PC-3 (cell line): ENCODE measurements at regions of chr3 and their contacts with region 1.

Region 1: DNA sequence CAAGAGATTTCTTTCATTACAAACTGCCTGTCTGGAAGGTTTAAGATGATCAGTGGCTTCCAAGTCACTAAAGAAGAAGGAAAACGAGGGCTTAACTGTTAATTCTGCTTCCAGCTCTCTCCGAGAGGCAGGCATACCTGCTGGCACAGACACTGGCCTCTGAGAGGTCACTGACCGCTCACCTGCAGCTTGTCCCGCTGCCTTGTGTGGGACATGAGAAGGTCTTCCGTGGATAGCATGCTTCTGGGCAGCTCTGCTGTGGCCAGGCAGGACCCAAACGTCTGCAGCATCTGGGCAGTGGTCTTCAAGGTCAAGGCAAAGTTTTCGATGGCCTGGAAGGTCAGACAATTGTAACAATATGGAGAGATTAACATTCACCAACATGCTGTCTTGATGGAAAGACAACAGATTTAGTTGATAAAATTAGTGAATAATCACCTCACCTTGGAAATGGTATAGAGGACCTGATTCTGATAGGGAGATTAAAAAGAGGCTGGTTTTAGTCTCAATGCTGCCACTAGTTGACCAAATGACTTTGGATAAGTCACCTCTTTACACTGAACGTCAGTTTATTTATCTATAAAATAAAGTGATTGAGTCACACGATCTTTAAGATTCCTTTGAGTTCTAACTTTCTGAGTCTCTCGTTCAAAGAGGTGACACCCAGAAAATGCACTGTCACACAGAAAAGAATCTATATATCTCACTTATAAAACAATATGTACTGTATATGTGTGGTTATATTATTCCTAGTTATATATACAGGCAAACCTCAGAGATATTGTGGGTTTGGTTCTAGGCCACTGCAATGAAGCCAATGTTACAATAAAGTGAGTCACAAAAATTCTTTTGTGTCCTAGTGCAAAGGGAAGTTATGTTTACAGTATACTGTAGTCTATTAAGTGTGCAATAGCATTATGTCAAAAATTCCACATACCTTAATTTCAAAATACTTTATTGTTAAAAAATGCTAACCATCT is 65.1 kb downstream of the B3GNT5 start:
- DNase-seq: peak; percentile 89
- ATAC-seq: peak; percentile 90
- H3K4me3 ChIP-seq: no peak overlapping the region
- H3K27ac ChIP-seq: peak overlapping the region; percentile 85
- H3K4me1 ChIP-seq: peaks cover 36% of the 10 kb centered on the region
- H3K27me3 ChIP-seq: no peaks in the 10 kb centered on the region
- CTCF ChIP-seq: peak; percentile 17; the same call in 1 of the 2 replicates

Region 2: GRCh38 chr3:183108001-183108449 is 210.2 kb before region 1 on chr3:
- CTCF ChIA-PET with region 1: no interaction called
- POLR2A ChIA-PET with region 1: no interaction called
- intact Hi-C with region 1: no loop called
- DNase-seq: peak; percentile 56
- ATAC-seq: peak; percentile 89
- H3K4me3 ChIP-seq: no peak overlapping the region
- H3K27ac ChIP-seq: peak overlapping the region; percentile 11
- H3K4me1 ChIP-seq: peaks cover 20% of the 10 kb centered on the region
- H3K27me3 ChIP-seq: no peaks in the 10 kb centered on the region
- CTCF ChIP-seq: no peak

Region 3: DNA sequence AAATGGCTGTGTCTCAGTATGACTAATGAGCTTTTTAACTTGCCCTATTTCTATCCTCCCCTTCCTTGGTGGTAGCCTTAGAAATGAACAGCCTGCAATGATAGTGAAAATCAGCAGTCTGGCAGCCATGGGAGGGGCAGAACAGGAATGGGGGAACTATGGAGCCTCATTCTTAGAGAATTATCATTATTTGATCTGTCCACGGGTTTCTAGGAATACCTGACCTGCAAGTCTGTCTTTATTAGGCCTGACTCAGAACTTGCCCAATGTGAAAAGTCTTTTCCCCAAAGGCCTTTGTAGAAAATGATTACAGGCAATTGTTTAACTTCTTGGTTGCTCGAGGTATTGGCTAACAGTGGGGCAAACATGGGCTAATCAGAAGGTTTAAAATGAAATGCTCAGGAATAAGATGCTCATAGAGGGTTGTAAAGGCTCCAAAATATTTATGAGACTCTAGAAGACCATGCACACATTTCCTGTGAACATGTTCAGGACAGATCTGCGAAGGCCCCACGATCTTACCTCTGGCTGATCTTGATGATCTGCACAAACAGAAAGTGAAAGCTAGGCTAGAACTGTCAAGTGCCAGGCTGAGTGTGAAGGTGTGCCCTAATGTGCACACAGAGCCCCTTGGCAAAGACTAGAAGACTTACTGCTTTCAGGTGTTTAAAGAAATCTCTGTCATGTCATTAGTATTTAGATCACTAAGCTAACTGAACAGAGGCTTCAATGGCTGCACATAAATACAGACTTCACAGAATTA is 116.0 kb before region 1 on chr3:
- CTCF ChIA-PET with region 1: no interaction called
- POLR2A ChIA-PET with region 1: no interaction called
- intact Hi-C with region 1: no loop called
- DNase-seq: peak; percentile 75
- ATAC-seq: peak; percentile 59
- H3K4me3 ChIP-seq: no peak overlapping the region
- H3K27ac ChIP-seq: no peak overlapping the region
- H3K4me1 ChIP-seq: no peaks in the 10 kb centered on the region
- H3K27me3 ChIP-seq: no peaks in the 10 kb centered on the region
- CTCF ChIP-seq: no peak

Region 4: GRCh38 chr3:183275418-183275817 is 42.8 kb before region 1 on chr3:
- CTCF ChIA-PET with region 1: no interaction called
- POLR2A ChIA-PET with region 1: no interaction called
- intact Hi-C with region 1: no loop called
- DNase-seq: peak; percentile 85
- ATAC-seq: peak; percentile 41
- H3K4me3 ChIP-seq: peak overlapping the region; percentile 37; the same call in 1 of the 2 replicates
- H3K27ac ChIP-seq: peak overlapping the region; percentile 89
- H3K4me1 ChIP-seq: peaks cover 70% of the 10 kb centered on the region
- H3K27me3 ChIP-seq: no peaks in the 10 kb centered on the region
- CTCF ChIP-seq: no peak

Region 5: GRCh38 chr3:183291497-183292040 is 26.6 kb before region 1 on chr3:
- CTCF ChIA-PET with region 1: no interaction called
- POLR2A ChIA-PET with region 1: no interaction called
- intact Hi-C with region 1: loop called (anchors 2 kb)
- DNase-seq: peak; percentile 81
- ATAC-seq: peak; percentile 66
- H3K4me3 ChIP-seq: no peak overlapping the region
- H3K27ac ChIP-seq: peak overlapping the region; percentile 88
- H3K4me1 ChIP-seq: peaks cover 55% of the 10 kb centered on the region
- H3K27me3 ChIP-seq: no peaks in the 10 kb centered on the region
- CTCF ChIP-seq: no peak

Region 6: GRCh38 chr3:183455089-183455488 is 136.9 kb after region 1 on chr3:
- CTCF ChIA-PET with region 1: no interaction called
- POLR2A ChIA-PET with region 1: no interaction called
- intact Hi-C with region 1: no loop called
- DNase-seq: peak; percentile 83
- ATAC-seq: peak; percentile 97
- H3K4me3 ChIP-seq: no peak overlapping the region
- H3K27ac ChIP-seq: peak overlapping the region; percentile 65
- H3K4me1 ChIP-seq: peaks cover 17% of the 10 kb centered on the region
- H3K27me3 ChIP-seq: no peaks in the 10 kb centered on the region
- CTCF ChIP-seq: no peak